OCI-LY7 (cell line): ENCODE measurements at regions of chr20 and their contacts with region 1.

Region 1: GRCh38 chr20:10385850-10386544 is 48.0 kb downstream of the MKKS start:
- DNase-seq: no peak
- H3K4me3 ChIP-seq: no peak overlapping the region
- H3K27ac ChIP-seq: no peak overlapping the region
- H3K4me1 ChIP-seq: no peaks in the 10 kb centered on the region
- CTCF ChIP-seq: no peak

Region 2: DNA sequence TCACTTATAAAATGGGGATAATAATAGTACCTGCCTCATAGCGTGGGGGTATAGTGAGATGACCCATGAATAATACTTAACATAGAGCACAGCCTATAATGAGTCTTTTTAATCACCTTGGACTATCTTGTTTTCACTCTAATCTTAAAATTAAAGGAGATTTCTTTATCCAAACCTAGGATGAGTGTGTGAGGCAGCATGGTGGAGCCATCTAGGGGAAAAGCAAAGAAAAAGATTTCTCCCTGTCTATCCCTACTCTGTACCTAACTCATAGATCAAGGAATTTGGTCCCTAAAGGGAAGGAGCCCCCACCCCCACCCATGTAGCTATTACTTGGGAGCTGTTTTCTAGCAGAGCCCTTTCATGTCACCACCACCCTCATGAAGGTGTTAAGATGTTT is 501.9 kb before region 1 on chr20:
- CTCF ChIA-PET with region 1: no interaction called
- POLR2A ChIA-PET with region 1: interaction called, 13 read pairs
- intact Hi-C with region 1: no loop called
- DNase-seq: no peak
- H3K4me3 ChIP-seq: no peak overlapping the region
- H3K27ac ChIP-seq: no peak overlapping the region
- H3K4me1 ChIP-seq: no peaks in the 10 kb centered on the region
- CTCF ChIP-seq: 0 out of 2 replicates have a peak, but pooled peaks have one; percentile 43